GM12878 (cell line): ENCODE measurements at regions of chr17 and their contacts with region 1.

Region 1: GRCh38 chr17:74368092-74369081 is 1.1 kb downstream of the GPR142 start:
- DNase-seq: no peak
- ATAC-seq: peak; percentile 93
- H3K4me3 ChIP-seq: no peak overlapping the region
- H3K27ac ChIP-seq: no peak overlapping the region
- H3K4me1 ChIP-seq: peaks cover 7% of the 10 kb centered on the region
- H3K27me3 ChIP-seq: no peaks in the 10 kb centered on the region; a peak in 3 of 4 replicates
- CTCF ChIP-seq: peak; percentile 93 to 97 (median 94)
- EP300 ChIP-seq: no peak
- POLR2A ChIP-seq: no peak
- RAD21 ChIP-seq: peak; percentile 73

Region 2: GRCh38 chr17:74394977-74395376 is 26.6 kb after region 1 on chr17:
- CTCF ChIA-PET with region 1: interaction called, 13 read pairs
- POLR2A ChIA-PET with region 1: no interaction called
- RAD21 ChIA-PET with region 1: interaction called, 6 read pairs
- SMC1A ChIA-PET with region 1: no interaction called
- in situ Hi-C with region 1: no loop called
- intact Hi-C with region 1: no loop called
- DNase-seq: no peak
- ATAC-seq: no peak
- H3K4me3 ChIP-seq: no peak overlapping the region
- H3K27ac ChIP-seq: no peak overlapping the region
- H3K4me1 ChIP-seq: no peaks in the 10 kb centered on the region
- H3K27me3 ChIP-seq: no peaks in the 10 kb centered on the region; a peak in 1 of 4 replicates
- CTCF ChIP-seq: no peak
- EP300 ChIP-seq: no peak
- POLR2A ChIP-seq: no peak
- RAD21 ChIP-seq: no peak

Region 3: DNA sequence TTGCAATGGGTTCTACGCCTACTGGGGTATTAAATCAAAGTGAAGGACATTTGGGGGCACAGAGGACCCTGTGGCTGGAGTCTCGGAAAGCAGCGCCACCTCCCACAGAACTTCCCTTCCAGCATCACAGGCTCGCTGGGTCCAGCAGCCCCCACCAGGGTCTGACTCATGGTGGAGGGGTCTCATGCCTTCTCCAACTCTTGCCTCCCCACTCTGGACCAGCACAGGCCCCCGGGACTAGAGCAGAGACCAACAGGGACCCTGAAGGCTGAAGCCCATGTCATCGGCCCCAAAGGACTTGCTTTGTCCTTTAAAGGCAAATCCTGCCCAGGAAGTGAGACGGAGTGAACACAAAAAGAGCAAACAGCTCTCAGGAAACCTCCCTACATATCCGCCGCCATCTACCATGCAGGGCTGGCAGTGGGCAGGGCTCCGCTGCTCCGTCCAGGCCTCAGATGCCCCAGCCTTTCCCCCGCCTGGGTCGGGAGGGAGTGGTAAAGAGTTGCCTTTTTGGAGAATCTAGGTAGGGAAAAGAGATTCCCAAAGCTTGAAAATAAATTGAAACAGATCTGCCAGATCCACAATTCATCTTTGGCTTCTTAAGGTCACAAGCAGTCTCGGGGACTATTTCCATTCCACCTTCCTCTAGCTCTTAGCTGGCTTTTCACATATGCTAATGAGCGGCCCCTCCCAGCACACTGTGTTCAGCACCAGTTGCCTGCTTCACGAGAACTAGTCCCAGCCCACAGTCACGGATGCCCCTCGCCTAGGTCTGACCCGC is 61.4 kb after region 1 on chr17:
- CTCF ChIA-PET with region 1: no interaction called
- POLR2A ChIA-PET with region 1: no interaction called
- RAD21 ChIA-PET with region 1: no interaction called
- SMC1A ChIA-PET with region 1: no interaction called
- in situ Hi-C with region 1: no loop called
- intact Hi-C with region 1: no loop called
- DNase-seq: no peak
- ATAC-seq: peak; percentile 56
- H3K4me3 ChIP-seq: no peak overlapping the region
- H3K27ac ChIP-seq: no peak overlapping the region; the same call in 1 of the 2 replicates
- H3K4me1 ChIP-seq: peaks cover 17% of the 10 kb centered on the region
- H3K27me3 ChIP-seq: peaks cover 3 to 11% of the 10 kb centered on the region in 2 experiments; a peak in 3 of 4 replicates
- CTCF ChIP-seq: no peak
- EP300 ChIP-seq: no peak
- POLR2A ChIP-seq: no peak
- RAD21 ChIP-seq: no peak

Region 4: DNA sequence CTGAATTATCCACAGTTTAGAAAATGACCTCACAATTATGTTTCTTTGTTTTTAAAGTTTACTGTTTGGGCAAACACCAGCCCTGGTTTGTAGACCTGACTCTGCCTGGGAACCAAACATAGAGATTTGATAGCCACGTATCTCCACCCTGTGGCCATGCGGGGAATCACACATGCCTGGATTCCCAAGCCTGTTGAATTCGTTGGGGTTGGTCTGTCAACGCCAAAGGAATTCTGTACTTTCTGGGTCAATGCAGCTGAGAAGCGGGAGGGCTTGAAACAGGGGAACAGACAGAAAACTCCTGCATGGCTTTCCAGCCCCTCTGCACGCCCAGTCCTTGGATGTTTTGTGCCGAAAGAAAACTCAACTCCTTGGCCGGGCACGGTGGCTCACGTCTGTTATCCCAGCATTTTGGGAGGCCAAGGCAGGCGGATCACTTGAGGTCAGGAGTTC is 125.0 kb after region 1 on chr17:
- CTCF ChIA-PET with region 1: interaction called, 16 read pairs
- POLR2A ChIA-PET with region 1: interaction called, 3 read pairs
- RAD21 ChIA-PET with region 1: interaction called, 7 read pairs
- SMC1A ChIA-PET with region 1: interaction called, 13 read pairs
- in situ Hi-C with region 1: no loop called
- intact Hi-C with region 1: loop called (anchors 1 kb)
- DNase-seq: peak; percentile 28
- ATAC-seq: peak; percentile 92
- H3K4me3 ChIP-seq: no peak overlapping the region
- H3K27ac ChIP-seq: no peak overlapping the region
- H3K4me1 ChIP-seq: no peaks in the 10 kb centered on the region
- H3K27me3 ChIP-seq: no peaks in the 10 kb centered on the region
- CTCF ChIP-seq: peak; percentile 93 to 95 (median 94); a peak in 5 of 6 replicates
- EP300 ChIP-seq: no peak
- POLR2A ChIP-seq: no peak
- RAD21 ChIP-seq: peak; percentile 98

Region 5: DNA sequence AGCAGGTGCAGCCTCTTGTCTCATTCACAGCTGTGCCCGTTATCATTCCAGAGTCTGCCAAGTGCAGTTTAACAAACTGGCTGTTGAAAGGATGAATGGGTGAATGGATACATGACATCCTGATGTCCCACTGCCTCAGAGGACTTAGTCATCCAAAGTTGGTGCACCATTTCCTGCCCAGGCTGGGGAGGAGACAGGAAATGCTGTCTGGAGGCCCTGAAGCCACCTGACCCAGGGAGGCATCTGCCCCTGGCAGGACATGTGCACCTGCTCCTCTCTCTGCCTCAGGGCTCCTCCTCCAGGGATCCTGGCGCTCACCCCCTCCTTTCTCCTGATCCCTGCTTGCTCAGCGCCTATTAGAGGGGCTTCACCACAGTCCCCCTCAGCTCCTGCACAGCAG is 179.3 kb after region 1 on chr17:
- CTCF ChIA-PET with region 1: no interaction called
- POLR2A ChIA-PET with region 1: no interaction called
- RAD21 ChIA-PET with region 1: no interaction called
- SMC1A ChIA-PET with region 1: no interaction called
- in situ Hi-C with region 1: no loop called
- intact Hi-C with region 1: no loop called
- DNase-seq: no peak
- ATAC-seq: no peak
- H3K4me3 ChIP-seq: no peak overlapping the region
- H3K27ac ChIP-seq: no peak overlapping the region
- H3K4me1 ChIP-seq: no peaks in the 10 kb centered on the region
- H3K27me3 ChIP-seq: no peaks in the 10 kb centered on the region; a peak in 2 of 4 replicates
- CTCF ChIP-seq: no peak
- EP300 ChIP-seq: no peak
- POLR2A ChIP-seq: no peak
- RAD21 ChIP-seq: no peak